ENCODE measurements at regions of chr7 and their contacts with region 1.

Region 1: DNA sequence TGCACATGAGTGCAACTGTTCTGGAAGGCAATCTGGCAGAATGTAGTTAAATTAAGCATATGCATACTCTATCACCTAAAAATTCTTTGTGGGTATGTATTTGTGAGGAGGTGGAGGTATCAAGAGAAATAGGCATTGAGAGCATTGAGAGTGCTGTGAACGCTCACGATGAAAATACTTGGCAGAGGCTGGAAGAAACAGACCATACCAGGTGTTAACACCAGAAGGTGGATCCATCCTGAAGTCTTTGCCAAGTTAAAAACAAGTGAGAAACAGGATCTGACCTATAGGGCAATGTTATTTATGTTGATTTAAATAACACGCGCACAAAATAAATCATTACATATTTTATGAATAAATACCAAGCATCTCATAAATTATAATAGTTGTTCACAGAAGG is 311.6 kb downstream of the PCLO start:
- DNase-seq: no peak
- ATAC-seq: no peak
- H3K4me3 Mint-ChIP-seq: no peak overlapping the region
- H3K27ac Mint-ChIP-seq: no peak overlapping the region
- H3K4me1 Mint-ChIP-seq: peaks cover 3% of the 10 kb centered on the region
- H3K27me3 Mint-ChIP-seq: no peaks in the 10 kb centered on the region
- CTCF ChIP-seq: no peak

Region 2: DNA sequence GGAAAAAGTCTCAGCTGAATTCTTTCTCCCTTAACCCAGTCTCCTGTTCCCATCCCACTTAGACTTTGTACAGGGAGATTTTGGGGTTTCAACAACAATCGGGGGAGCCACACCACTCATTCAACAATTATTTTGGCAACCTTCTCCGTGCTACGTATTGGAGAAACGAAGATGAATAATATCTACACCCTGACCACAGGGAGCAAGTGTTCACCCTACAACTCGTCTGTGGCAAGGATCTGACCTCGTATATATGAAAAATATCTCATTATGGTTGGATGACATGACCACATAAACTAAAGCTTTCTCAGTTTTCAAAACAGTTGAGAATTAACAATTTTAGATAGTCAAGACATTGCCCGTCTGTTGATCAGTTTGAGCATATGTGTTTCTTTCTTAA is 709.7 kb before region 1 on chr7:
- CTCF ChIA-PET with region 1: no interaction called
- POLR2A ChIA-PET with region 1: interaction called, 10 read pairs
- DNase-seq: no peak
- ATAC-seq: no peak
- H3K4me3 Mint-ChIP-seq: no peak overlapping the region
- H3K27ac Mint-ChIP-seq: no peak overlapping the region
- H3K4me1 Mint-ChIP-seq: no peaks in the 10 kb centered on the region
- H3K27me3 Mint-ChIP-seq: no peaks in the 10 kb centered on the region
- CTCF ChIP-seq: no peak

Region 3: GRCh38 chr7:82818171-82818570 is 33.0 kb before region 1 on chr7:
- CTCF ChIA-PET with region 1: no interaction called
- POLR2A ChIA-PET with region 1: no interaction called
- DNase-seq: no peak
- ATAC-seq: peak; percentile 84
- H3K4me3 Mint-ChIP-seq: no peak overlapping the region
- H3K27ac Mint-ChIP-seq: peak overlapping the region; percentile 70
- H3K4me1 Mint-ChIP-seq: peaks cover 66% of the 10 kb centered on the region
- H3K27me3 Mint-ChIP-seq: no peaks in the 10 kb centered on the region
- CTCF ChIP-seq: no peak